ENCODE measurements at regions of chr3 and their contacts with region 1.

Region 1: DNA sequence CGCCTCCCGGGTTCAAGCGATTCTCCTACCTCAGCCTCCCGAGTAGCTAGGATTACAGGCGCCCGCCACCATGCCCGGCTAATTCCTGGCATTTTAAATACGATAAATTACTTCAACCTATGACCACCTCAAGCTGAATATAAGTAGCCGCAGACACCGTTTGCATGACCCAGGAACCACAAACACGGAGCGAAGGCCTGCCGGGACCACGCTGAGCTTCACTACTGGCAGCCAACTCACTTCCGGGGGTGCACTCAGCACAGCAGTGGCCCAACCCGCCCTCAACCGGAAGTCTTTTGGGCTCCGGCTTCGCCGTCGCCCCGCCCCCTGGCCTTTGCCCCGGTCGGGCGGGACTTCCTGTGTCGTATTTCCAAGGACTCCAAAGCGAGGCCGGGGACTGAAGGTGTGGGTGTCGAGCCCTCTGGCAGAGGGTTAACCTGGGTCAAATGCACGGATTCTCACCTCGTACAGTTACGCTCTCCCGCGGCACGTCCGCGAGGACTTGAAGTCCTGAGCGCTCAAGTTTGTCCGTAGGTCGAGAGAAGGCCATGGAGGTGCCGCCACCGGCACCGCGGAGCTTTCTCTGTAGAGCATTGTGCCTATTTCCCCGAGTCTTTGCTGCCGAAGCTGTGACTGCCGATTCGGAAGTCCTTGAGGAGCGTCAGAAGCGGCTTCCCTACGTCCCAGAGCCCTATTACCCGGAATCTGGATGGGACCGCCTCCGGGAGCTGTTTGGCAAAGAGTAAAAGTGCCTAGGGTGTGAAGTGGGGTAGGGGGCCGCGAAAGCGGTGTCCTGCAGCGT is at the start of gene TIMMDC1:
- DNase-seq: peak; percentile 89 to 94
- H3K4me3 ChIP-seq: peak within 1 kb of the TSS; percentile 93 to 98 (median 97)
- H3K27ac ChIP-seq: peak within 1 kb of the TSS; percentile 90
- H3K4me1 ChIP-seq: no peaks in the 10 kb centered on the region; a peak in 1 of 7 replicates
- H3K27me3 ChIP-seq: no peaks in the 10 kb centered on the region
- CTCF ChIP-seq: no peak
- EP300 ChIP-seq: no peak
- POLR2A ChIP-seq: peak; percentile 91 to 96
- RAD21 ChIP-seq: no peak
- total RNA-seq, gene TIMMDC1: 128 and 130 TPM in 2 replicates

Region 2: GRCh38 chr3:119463171-119464169 is 34.9 kb before region 1 on chr3 and contains the start of gene TMEM39A:
- CTCF ChIA-PET with region 1: interaction called, 4 read pairs
- POLR2A ChIA-PET with region 1: interaction called, 27 read pairs
- DNase-seq: peak; percentile 93 to 100
- H3K4me3 ChIP-seq: peak within 1 kb of the TSS; percentile 88 to 98 (median 95)
- H3K27ac ChIP-seq: peak within 1 kb of the TSS; percentile 84
- H3K4me1 ChIP-seq: peaks cover 0 to 5% (median 1%) of the 10 kb centered on the region in 4 experiments; a peak in 5 of 7 replicates
- H3K27me3 ChIP-seq: no peaks in the 10 kb centered on the region
- CTCF ChIP-seq: peak in 2 of 3 experiments; percentile 0 to 3; a peak in 2 of 4 replicates
- EP300 ChIP-seq: peak in 1 of 2 experiments; percentile 82; a peak in 1 of 3 replicates
- POLR2A ChIP-seq: peak; percentile 89 to 99
- RAD21 ChIP-seq: 0 out of 4 replicates have a peak, but pooled peaks of 1 of the 2 experiments have one; percentile 4
- total RNA-seq, gene TMEM39A: 36.1 and 43.7 TPM in 2 replicates

Region 3: DNA sequence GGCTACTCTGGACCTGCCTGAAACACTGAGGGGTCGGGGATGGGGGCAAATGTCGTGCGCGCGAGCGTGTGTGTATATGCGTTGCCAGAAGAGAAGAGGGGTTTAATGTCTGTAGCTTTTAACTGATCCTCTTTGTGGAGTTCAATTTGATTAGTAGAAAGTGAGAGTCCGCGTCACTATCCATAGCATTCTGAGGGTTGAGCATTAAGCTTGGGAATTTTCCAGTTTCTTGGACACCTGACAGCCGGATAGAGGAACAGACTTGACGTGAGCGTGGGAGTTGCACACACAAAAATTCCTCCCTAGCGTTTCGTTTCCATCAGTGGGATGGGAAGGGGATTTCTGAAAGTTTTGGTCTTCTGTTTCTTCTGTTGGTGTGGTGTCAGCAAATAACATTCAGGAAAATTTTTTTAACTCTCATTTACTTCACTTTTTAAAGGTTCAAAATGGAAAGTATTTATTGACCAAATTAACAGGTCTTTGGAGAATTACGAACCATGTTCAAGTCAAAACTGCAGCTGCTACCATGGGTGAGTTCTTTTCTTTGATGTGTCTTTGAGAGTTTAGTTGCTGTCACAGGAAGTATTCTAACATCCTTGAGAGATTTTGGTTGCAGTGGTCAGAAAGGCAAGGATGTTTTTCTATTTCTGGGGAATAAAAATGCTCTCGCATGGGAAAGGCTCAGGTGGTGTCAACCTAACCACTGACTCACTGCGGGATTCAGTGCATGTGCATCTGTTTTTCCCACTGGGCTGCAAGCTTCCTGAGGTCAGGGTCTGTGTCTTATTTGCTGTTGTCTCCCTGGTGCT is 28.8 kb before region 1 on chr3:
- CTCF ChIA-PET with region 1: interaction called, 4 read pairs
- POLR2A ChIA-PET with region 1: interaction called, 27 read pairs
- DNase-seq: no peak
- H3K4me3 ChIP-seq: peak overlapping the region; percentile 75 to 88 (median 82)
- H3K27ac ChIP-seq: no peak overlapping the region
- H3K4me1 ChIP-seq: peaks cover 0 to 6% (median 1%) of the 10 kb centered on the region in 4 experiments; a peak in 2 of 7 replicates
- H3K27me3 ChIP-seq: no peaks in the 10 kb centered on the region
- CTCF ChIP-seq: no peak
- EP300 ChIP-seq: no peak
- POLR2A ChIP-seq: no peak
- RAD21 ChIP-seq: no peak